Naive thymus-derived CD8-positive, alpha-beta T cell (primary cell): ENCODE measurements at regions of chr1 and their contacts with region 1.

Region 1: DNA sequence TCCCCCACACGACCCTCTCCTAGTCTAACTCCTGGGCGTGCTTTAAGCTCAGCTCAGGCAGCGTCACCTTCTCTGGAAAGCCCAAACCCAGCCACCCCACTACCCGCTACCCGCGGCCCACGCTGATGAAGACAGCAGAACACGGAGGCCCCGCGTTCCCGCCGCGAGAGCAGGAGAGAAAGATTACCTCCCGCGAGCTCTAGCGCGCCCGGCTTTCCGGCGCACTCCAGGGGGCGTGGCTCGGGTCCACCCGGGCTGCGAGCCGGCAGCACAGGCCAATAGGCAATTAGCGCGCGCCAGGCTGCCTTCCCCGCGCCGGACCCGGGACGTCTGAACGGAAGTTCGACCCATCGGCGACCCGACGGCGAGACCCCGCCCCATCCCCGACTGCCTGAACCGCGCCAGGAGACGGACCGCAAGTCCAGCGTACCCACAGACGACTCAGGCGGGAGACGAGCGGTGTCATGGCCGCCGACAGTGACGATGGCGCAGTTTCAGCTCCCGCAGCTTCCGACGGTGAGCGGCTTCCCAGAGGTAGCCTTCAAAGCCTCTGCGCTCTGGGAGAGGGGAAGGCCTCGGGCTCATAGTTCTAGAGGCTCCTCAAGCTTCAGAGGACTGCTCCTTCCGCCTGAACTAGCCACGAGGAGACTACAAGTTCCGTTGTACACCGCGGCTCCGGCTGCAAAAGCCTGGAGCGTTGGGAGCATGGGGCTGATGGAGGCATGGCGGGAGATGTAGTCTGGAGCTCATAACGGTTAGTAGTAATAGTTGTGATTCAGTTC is at the starts of genes MUTYH and TOE1:
- DNase-seq: peak; percentile 83 to 92 (median 88)
- ATAC-seq: peak; percentile 83 to 86
- H3K4me3 Mint-ChIP-seq: peak within 1 kb of the TSS; percentile 94 to 100 (median 100)
- H3K27ac Mint-ChIP-seq: peak within 1 kb of the TSS; percentile 98 to 100 (median 99)
- H3K4me1 Mint-ChIP-seq: peaks cover 38 to 81% (median 55%) of the 10 kb centered on the region in 4 donors
- H3K27me3 Mint-ChIP-seq: no peaks in the 10 kb centered on the region
- polyA plus RNA-seq, gene MUTYH: 21.8 to 24.7 (median 24.4) TPM
- polyA plus RNA-seq, gene TOE1: 8.2 to 12.3 (median 10.7) TPM

Region 2: DNA sequence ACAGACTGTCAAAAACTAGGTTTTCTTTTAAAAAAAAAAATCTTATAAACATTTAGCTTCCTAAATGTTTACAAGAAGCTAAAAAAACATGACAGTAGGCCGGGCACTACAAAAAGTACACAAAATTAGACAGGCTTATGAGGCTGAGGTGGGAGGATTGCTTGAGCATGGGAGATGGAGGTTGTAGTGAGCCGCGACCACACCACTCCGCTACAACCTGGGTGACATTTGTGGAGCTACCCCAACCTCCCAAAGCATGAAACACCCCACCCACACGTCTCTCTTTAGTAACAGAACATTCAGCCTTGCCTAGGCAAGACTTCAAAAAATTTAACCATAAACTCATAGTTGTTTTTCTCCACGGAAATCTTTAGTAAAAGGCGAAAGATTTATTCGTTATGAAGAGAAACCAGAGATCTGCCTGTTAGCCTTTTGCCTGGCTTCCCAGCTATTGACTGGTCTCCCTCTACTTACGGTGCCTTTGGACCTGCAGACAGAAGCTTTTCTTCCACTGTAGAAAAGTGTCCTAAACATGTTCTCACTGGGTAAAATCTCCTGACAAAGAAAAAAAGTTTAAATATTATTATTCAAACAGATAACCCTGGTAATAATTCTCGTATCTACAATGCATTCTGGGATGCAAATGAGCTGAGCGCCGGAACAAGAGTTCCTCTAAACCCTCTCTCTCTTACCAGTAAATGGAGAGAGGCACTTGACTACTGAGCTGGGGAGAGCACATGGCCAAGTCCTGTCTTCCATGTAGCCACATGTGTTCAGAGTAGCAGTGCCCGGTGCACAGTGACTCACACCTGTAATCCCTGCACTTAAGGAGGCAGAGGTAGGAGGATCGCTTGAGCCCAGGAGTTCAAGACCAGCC is 618.3 kb before region 1 on chr1:
- POLR2A ChIA-PET with region 1: interaction called, 12 read pairs
- DNase-seq: peak; percentile 17 to 85 (median 74)
- ATAC-seq: peak; percentile 84 to 90
- H3K4me3 Mint-ChIP-seq: peak overlapping the region; percentile 42 to 85 (median 79)
- H3K27ac Mint-ChIP-seq: peak overlapping the region; percentile 93 to 99 (median 96)
- H3K4me1 Mint-ChIP-seq: peaks cover 50 to 80% (median 78%) of the 10 kb centered on the region in 4 donors
- H3K27me3 Mint-ChIP-seq: no peaks in the 10 kb centered on the region

Region 3: DNA sequence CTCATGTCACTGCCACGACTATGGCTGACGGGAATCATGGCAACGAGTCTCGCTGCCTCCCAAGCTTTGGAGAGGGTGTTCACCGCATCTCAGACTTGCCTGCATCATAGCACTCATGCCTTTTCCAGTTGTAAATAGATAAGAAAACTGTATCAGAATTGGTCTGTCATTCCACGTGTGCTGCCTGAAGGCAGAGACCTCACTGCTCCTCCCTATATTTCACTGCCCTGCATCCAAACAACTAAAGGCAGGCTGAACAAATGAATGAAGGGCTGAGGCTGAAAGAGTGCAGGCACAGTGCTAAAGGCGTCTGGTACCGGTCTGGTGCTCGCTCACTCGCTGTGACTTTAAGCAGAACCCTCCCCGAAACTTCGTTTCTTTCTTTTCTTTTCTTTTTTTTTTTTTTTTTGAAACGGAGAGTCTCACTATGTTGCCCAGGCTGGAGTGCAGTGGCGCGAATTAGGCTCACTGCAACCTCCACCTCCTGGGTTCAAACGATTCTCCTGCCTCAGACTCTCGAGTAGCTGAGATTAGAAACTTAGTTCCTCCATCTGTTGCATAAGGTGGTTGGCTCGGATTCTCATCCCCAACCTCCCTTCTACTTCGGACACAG is 354.1 kb before region 1 on chr1:
- POLR2A ChIA-PET with region 1: interaction called, 13 read pairs
- DNase-seq: no peak
- ATAC-seq: no peak
- H3K4me3 Mint-ChIP-seq: peak overlapping the region; percentile 94 to 100 (median 99)
- H3K27ac Mint-ChIP-seq: peak overlapping the region in 9 of 10 donors; percentile 88 to 97 (median 94)
- H3K4me1 Mint-ChIP-seq: peaks cover 9 to 27% (median 23%) of the 10 kb centered on the region in 4 donors
- H3K27me3 Mint-ChIP-seq: no peaks in the 10 kb centered on the region

Region 4: DNA sequence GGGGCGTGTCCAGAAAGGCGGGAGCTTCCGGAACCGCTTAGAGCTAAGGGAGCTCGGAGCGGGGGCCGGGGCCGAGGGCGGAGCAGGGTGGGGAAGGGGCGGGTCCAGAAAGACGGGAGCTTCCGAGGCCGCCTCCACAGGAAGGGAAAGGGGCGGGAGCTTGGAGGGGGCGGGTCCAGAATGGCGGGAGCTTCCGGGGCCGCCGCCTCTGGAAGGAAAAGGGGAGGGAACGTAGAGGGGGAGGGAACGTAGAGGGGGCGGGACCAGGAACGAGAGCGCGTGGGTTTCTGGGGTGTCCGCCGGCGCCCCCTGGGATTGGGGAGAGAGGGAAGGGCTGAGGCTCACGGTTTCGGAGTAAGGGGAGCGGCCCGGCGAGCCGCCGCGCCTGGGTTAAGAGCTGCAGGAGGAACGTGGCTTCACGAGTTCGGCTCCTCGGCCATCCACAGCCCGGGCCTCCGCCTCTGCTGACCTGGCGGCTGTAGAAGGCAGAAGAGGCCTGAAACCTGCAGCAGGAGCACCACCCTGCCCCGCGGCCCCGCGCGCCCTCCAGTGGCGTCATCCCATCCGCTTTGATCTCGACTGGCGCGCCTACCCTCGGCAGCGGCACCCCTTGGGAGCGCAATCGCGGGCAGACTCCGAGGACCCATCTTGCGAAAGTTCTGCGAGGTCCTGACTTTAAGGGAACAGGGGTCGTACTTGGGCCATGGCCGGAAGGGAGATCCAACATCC is 36.2 kb before region 1 on chr1:
- POLR2A ChIA-PET with region 1: interaction called, 85 read pairs
- DNase-seq: peak; percentile 86 to 98 (median 96)
- ATAC-seq: peak; percentile 83 to 86
- H3K4me3 Mint-ChIP-seq: peak overlapping the region; percentile 88 to 96 (median 92)
- H3K27ac Mint-ChIP-seq: peak overlapping the region; percentile 91 to 98 (median 96)
- H3K4me1 Mint-ChIP-seq: peaks cover 5 to 37% (median 20%) of the 10 kb centered on the region in 4 donors
- H3K27me3 Mint-ChIP-seq: no peaks in the 10 kb centered on the region

Region 5: DNA sequence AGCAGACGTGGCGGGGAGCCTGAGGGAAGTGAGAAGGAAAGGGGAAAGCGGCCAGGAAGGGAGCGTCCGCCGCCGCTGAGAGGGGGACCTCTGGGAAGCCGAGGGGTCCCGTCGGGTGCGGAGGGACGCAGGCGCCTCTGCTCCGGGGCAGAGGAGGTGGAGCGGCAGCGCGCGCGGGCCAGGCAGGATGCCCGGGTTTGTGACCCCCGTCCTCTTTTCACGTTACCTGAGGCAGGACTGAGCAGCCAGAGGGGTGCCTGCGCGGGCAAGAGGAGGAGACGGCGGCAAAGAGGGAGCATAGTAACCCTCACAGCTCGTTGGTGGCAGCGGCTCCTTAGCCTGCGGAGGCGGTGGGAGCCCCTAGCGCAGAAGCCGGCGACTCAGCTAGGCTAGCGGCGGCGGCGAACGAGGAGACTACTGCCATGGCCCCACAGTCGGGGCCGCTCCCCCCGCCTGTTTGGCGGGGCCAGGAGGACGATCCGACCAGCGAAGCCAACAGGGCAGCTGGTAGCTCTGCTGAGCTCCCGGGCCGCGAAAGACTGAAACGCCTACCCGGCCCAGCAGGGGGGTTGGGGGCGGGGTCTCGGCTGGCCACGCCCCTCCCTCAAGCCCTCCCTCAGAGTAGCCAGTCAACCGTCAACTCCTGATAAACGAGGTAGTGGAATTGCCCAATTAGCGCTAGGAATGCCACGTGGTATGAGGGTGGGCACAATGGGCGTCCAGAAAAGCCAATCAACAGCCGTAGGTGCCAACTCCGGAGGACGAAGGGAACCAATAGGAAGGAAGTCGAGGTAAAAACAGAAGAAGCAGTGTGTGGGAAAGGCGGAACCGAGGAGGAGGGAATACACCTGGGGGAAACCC is 150.9 kb after region 1 on chr1 and contains the start of gene TESK2:
- POLR2A ChIA-PET with region 1: interaction called, 30 read pairs
- DNase-seq: peak; percentile 94 to 98 (median 97)
- ATAC-seq: peak; percentile 91 to 94
- H3K4me3 Mint-ChIP-seq: no peak within 1 kb of the TSS
- H3K27ac Mint-ChIP-seq: no peak within 1 kb of the TSS
- H3K4me1 Mint-ChIP-seq: peaks cover 6 to 13% (median 12%) of the 10 kb centered on the region in 4 donors
- H3K27me3 Mint-ChIP-seq: no peaks in the 10 kb centered on the region
- polyA plus RNA-seq, gene TESK2: 2.3 to 3.1 (median 2.7) TPM

Region 6: GRCh38 chr1:45521398-45522323 is 181.7 kb after region 1 on chr1 and contains the start of gene PRDX1:
- POLR2A ChIA-PET with region 1: interaction called, 19 read pairs
- DNase-seq: peak; percentile 87 to 97 (median 93)
- ATAC-seq: peak; percentile 86 to 87
- H3K4me3 Mint-ChIP-seq: peak within 1 kb of the TSS; percentile 88 to 97 (median 95)
- H3K27ac Mint-ChIP-seq: peak within 1 kb of the TSS; percentile 88 to 96 (median 92)
- H3K4me1 Mint-ChIP-seq: peaks cover 13 to 40% (median 34%) of the 10 kb centered on the region in 4 donors
- H3K27me3 Mint-ChIP-seq: no peaks in the 10 kb centered on the region
- polyA plus RNA-seq, gene PRDX1: 174 to 214 (median 205) TPM

Region 7: DNA sequence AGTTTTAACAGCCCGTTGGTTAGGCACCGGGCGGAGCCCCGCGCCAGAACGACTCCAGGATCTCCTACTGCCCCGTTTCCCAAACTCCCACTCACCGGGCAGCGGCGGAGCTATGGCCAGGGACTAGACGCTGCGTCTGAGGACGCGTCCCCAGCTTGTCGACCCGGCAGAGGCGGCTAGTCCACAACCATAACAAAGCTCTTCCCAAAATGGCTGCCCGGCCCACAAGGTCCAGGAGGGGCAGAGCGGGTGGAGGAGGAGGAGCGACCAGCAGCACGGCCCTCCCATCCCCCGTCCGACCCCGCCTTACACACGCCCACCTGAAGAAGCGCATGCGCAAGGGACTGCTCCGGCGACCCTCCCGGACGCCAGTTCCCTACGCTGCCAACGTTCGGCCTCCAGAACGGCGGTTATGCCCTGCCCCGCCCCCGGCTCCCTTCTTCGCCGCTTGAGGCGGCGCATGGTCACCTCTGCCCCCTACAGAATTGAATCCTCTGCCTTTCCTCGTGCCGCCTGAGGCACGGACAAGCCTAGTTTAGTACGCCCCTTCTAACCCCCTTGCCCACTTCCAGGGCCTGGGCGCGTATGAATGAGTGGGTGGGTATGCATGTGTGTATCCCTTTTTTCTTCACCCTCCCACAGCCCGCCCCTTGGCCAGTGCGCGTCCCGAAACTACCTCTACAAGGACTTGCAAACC is 346.5 kb after region 1 on chr1 and contains the start of gene GPBP1L1:
- POLR2A ChIA-PET with region 1: interaction called, 12 read pairs
- DNase-seq: peak; percentile 94 to 98 (median 98)
- ATAC-seq: peak; percentile 72
- H3K4me3 Mint-ChIP-seq: peak within 1 kb of the TSS; percentile 93 to 100 (median 99)
- H3K27ac Mint-ChIP-seq: peak within 1 kb of the TSS; percentile 99 to 100 (median 99)
- H3K4me1 Mint-ChIP-seq: peaks cover 19 to 66% (median 58%) of the 10 kb centered on the region in 4 donors
- H3K27me3 Mint-ChIP-seq: no peaks in the 10 kb centered on the region
- polyA plus RNA-seq, gene GPBP1L1: 88.9 to 94.0 (median 92.1) TPM